RWPE1 (cell line): ENCODE measurements at regions of chr3 and their contacts with region 1.

Region 1: DNA sequence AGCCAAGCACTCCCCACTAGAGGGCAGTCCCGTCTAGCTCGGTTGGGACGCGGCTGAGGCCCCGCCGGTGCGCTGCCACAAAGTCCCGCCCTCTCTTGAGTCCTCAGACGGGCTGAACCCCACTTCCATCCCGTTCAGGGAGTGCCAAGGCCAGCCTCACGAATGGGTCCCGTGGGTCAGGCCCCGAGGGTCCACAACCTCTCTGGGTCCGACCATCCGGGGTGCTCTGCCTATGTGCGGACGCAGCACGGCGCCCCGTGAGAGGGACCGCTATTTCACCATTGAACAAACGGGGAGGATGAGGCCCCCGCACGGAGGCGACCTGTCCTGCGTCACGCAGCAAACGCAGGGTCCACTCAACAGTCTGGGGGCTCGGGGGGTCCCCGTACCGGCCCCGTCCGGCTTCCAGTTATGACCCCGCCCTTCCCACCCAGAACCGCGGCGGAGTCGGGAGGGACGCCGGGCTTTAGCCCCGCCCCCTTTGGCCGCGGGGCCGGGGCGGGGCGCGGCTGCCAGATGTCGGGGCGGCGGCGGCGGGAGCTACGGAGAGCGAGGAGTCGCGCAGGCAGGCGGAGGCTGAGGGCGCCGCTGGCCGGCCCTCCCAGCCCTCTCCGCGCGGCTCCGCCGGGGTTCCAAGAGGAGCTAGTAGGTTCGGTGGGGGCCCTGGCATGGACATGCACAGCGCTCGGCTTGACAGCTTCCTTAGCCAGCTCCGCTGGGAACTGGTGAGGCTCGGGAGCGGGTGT is at the start of gene INKA1:
- DNase-seq: peak; percentile 77
- H3K27ac ChIP-seq: peak within 1 kb of the TSS; percentile 98
- CTCF ChIP-seq: peak; percentile 92

Region 2: DNA sequence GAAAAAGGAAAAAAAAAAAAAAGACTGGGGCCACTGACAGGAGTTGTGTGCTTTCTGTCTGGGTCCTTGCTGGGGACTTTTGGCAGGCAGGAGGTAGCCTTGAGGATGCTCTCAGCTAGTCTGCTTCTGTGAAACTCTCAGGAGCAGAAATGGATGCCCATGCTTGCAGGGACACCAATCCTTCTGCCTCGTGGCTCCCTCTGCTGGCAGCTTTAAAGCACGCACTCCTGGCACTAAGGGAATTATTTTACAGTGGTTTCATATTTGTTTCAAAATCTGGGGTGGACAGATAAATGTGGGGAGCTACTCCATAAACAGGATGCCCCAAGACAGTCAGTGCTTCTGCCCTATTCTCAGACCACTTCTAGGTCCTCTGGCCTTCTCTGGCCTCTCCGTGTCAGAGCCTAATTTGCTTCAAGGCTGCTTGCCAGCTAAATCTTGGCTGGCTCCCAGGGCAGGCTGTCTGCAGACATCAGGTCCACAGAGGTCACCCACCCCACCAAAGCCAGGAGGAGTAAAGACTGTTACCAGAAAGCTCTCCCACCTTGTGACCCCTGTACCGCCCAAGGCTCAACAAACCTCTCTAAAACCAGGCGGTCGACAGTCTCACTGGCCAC is 36.4 kb after region 1 on chr3:
- CTCF ChIA-PET with region 1: interaction called, 40 read pairs
- POLR2A ChIA-PET with region 1: no interaction called
- DNase-seq: peak; percentile 51
- H3K27ac ChIP-seq: peak overlapping the region; percentile 61
- CTCF ChIP-seq: peak; percentile 90